HepG2 (cell line): ENCODE measurements at regions of chr17 and their contacts with region 1.

Region 1: DNA sequence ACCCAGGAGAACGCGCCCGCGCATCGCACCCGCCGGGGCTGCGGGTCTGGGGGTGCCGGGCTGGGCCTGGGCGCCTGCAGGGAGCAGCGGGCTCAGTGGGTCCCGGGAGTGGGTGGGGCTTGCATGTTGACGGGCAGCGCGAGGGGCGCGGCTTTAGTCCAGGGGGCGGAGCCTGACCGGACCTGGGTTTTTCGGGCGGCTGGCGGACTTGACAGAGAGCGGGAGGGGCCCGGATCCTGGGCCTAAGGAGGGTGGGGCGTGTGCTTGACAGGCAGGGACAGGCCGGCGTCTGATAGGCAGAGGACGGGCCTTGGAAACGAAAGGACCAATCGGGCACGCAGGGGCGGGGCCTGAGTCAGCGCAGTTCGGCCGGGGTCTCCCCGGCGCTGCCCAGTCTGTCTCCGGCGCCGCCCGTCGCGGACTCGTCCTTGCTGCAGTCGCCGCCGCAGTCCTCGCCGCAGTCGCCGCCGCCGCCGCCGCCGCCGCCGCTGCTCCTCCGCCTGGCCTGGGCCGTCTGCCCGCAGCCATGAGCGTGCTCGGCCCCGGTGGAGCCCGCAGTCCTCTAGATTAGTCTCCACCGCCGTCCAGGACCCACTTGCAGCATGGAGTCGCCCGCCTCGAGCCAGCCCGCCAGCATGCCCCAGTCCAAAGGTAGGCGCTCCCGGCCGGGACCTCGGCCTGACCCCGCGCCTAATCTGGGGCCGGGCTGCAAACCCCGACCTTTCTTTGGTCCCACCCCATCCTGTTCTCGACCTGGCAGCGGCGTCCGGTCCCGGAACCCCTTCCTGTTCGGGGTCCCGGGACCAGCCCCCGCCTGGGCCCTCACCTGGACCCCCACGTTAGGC is at the start of gene MAP2K3:
- DNase-seq: peak; percentile 97
- ATAC-seq: peak; percentile 70
- H3K4me3 ChIP-seq: peak within 1 kb of the TSS; percentile 82 to 96 (median 95)
- H3K27ac ChIP-seq: peak within 1 kb of the TSS; percentile 90
- H3K4me1 ChIP-seq: peaks cover 53% of the 10 kb centered on the region
- H3K27me3 ChIP-seq: peaks cover 2 to 19% of the 10 kb centered on the region in 2 experiments; a peak in 4 of 5 replicates
- CTCF ChIP-seq: 0 out of 2 replicates have a peak, but pooled peaks have one; percentile 11
- EP300 ChIP-seq: no peak
- POLR2A ChIP-seq: peak; percentile 93 to 99
- RAD21 ChIP-seq: peak; percentile 29
- total RNA-seq, gene MAP2K3: 20.5 and 39.8 TPM in 2 replicates

Region 2: GRCh38 chr17:21043286-21044232 is 241.0 kb before region 1 on chr17:
- CTCF ChIA-PET with region 1: no interaction called
- POLR2A ChIA-PET with region 1: interaction called, 16 read pairs
- in situ Hi-C with region 1: no loop called
- intact Hi-C with region 1: loop called (anchors 10 kb)
- DNase-seq: peak; percentile 96
- ATAC-seq: peak; percentile 95
- H3K4me3 ChIP-seq: peak overlapping the region; percentile 63 to 89 (median 81)
- H3K27ac ChIP-seq: peak overlapping the region; percentile 89
- H3K4me1 ChIP-seq: peaks cover 37% of the 10 kb centered on the region
- H3K27me3 ChIP-seq: no peaks in the 10 kb centered on the region; a peak in 1 of 5 replicates
- CTCF ChIP-seq: peak; percentile 88
- EP300 ChIP-seq: no peak
- POLR2A ChIP-seq: peak in 1 of 2 experiments; percentile 73; a peak in 3 of 4 replicates
- RAD21 ChIP-seq: peak; percentile 76; the same call in 1 of the 2 replicates

Region 3: GRCh38 chr17:21214015-21214776 is 70.3 kb before region 1 on chr17 and contains the start of gene TMEM11:
- CTCF ChIA-PET with region 1: no interaction called
- POLR2A ChIA-PET with region 1: interaction called, 20 read pairs
- in situ Hi-C with region 1: no loop called
- intact Hi-C with region 1: loop called (anchors 2 kb)
- DNase-seq: peak; percentile 86
- ATAC-seq: peak; percentile 93
- H3K4me3 ChIP-seq: peak within 1 kb of the TSS; percentile 83 to 99 (median 96)
- H3K27ac ChIP-seq: peak within 1 kb of the TSS; percentile 94
- H3K4me1 ChIP-seq: peaks cover 60% of the 10 kb centered on the region
- H3K27me3 ChIP-seq: no peaks in the 10 kb centered on the region; a peak in 1 of 5 replicates
- CTCF ChIP-seq: peak; percentile 24; the same call in 1 of the 2 replicates
- EP300 ChIP-seq: no peak
- POLR2A ChIP-seq: peak; percentile 70 to 71
- RAD21 ChIP-seq: no peak; the same call in none of the 2 replicates
- total RNA-seq, gene TMEM11: 18.7 and 21.3 TPM in 2 replicates

Region 4: GRCh38 chr17:21318439-21318838 is 33.9 kb after region 1 on chr17:
- CTCF ChIA-PET with region 1: no interaction called
- POLR2A ChIA-PET with region 1: interaction called, 4 read pairs
- in situ Hi-C with region 1: no loop called
- intact Hi-C with region 1: loop called (anchors 5 kb)
- DNase-seq: no peak
- ATAC-seq: no peak
- H3K4me3 ChIP-seq: no peak overlapping the region
- H3K27ac ChIP-seq: no peak overlapping the region
- H3K4me1 ChIP-seq: peaks cover 22% of the 10 kb centered on the region
- H3K27me3 ChIP-seq: peaks cover 0 to 1% of the 10 kb centered on the region in 2 experiments; a peak in 1 of 5 replicates
- CTCF ChIP-seq: no peak
- EP300 ChIP-seq: no peak
- POLR2A ChIP-seq: no peak
- RAD21 ChIP-seq: no peak

Region 5: DNA sequence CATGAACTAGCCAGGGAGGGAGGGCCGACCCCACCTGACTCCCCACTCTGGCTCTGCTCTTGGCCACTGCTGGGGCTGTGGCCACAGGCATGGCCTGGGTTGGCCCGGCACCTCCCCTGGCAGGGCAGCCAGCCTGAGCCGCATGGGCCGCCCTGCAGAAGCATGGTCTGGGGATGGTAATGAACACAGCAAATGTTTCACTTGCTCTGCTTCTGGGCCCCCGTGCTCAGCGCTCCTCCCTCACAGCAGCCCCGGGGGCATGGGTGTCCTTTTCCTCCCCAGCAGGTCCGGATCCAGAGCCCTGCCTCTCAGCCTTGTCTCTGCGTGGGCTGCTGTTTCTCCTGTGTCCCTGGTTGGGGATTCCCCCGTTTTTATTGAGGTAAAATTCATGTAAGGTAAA is 60.7 kb after region 1 on chr17:
- CTCF ChIA-PET with region 1: no interaction called
- POLR2A ChIA-PET with region 1: no interaction called
- in situ Hi-C with region 1: no loop called
- intact Hi-C with region 1: no loop called
- DNase-seq: no peak
- ATAC-seq: no peak
- H3K4me3 ChIP-seq: no peak overlapping the region
- H3K27ac ChIP-seq: no peak overlapping the region
- H3K4me1 ChIP-seq: no peaks in the 10 kb centered on the region
- H3K27me3 ChIP-seq: no peaks in the 10 kb centered on the region
- CTCF ChIP-seq: no peak
- EP300 ChIP-seq: no peak
- POLR2A ChIP-seq: no peak
- RAD21 ChIP-seq: no peak

Region 6: GRCh38 chr17:21511363-21512198 is 227.0 kb after region 1 on chr17:
- CTCF ChIA-PET with region 1: interaction called, 7 read pairs
- POLR2A ChIA-PET with region 1: interaction called, 3 read pairs
- in situ Hi-C with region 1: loop called (anchors 5 kb)
- intact Hi-C with region 1: no loop called
- DNase-seq: peak; percentile 38
- ATAC-seq: peak; percentile 96
- H3K4me3 ChIP-seq: peak overlapping the region in 2 of 3 experiments; percentile 32 to 55; a peak in 2 of 6 replicates
- H3K27ac ChIP-seq: no peak overlapping the region
- H3K4me1 ChIP-seq: 0 out of 2 replicates have a peak, but pooled peaks cover 6% of the 10 kb centered on the region
- H3K27me3 ChIP-seq: peaks cover 2 to 25% of the 10 kb centered on the region in 2 experiments
- CTCF ChIP-seq: peak; percentile 82
- EP300 ChIP-seq: no peak
- POLR2A ChIP-seq: no peak
- RAD21 ChIP-seq: peak; percentile 69; the same call in 1 of the 2 replicates